Heart left ventricle (tissue), 16 donors: ENCODE measurements at regions of chr20 and their contacts with region 1.

Region 1: GRCh38 chr20:58870239-58871014 is 17.9 kb downstream of the GNAS start:
- DNase-seq: peak; percentile 64 to 80 (median 67)
- ATAC-seq: peak; percentile 59 to 90 (median 86)
- H3K4me3 ChIP-seq: no peak overlapping the region
- H3K27ac ChIP-seq: no peak overlapping the region
- H3K4me1 ChIP-seq: peaks cover 0 to 8% (median 0%) of the 10 kb centered on the region in 12 donors
- H3K27me3 ChIP-seq: no peaks in the 10 kb centered on the region
- CTCF ChIP-seq: peak; percentile 80 to 94 (median 91)
- POLR2A ChIP-seq: no peak

Region 2: DNA sequence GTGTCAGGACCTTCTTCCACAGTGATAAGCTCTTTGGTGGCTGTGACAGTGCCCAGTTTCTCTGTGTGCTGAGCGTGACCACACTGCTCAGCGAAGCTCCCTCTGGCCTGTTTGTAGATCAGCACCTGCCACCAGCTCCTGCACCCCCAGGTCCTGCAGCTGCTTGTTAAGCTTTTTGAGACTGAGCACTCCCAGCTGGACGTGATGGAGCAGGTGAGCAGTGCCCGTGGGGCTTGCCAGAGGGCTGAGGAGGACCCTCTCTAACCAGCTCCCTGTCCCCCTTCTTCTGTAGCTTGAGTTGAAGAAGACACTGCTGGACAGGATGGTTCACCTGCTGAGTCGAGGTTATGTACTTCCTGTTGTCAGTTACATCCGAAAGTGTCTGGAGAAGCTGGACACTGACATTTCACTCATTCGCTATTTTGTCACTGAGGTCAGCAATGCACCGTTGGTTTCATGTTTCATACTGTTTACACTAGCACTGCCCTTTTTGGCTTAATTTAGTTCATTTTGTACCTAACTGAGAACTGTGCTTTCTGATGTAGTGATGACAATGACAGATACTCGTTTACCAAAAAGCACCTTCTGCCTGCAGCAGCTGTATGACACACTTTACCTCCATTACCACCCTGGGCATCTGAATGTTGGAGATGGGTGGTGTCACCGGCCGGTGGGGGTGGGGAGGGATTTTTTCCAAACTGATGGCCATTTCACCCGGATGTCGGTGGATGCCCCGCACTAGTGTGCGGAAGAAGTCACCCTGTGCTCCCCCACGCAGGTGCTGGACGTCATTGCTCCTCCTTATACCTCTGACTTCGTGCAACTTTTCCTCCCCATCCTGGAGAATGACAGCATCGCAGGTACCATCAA is 123.1 kb after region 1 on chr20:
- intact Hi-C with region 1: no loop called
- DNase-seq: peak in 2 of 5 donors; percentile 13 to 17
- ATAC-seq: peak in 1 of 4 donors; percentile 7
- H3K4me3 ChIP-seq: no peak overlapping the region
- H3K27ac ChIP-seq: peak overlapping the region in 1 of 12 donors; percentile 37
- H3K4me1 ChIP-seq: peaks cover 0 to 14% (median 0%) of the 10 kb centered on the region in 12 donors
- H3K27me3 ChIP-seq: no peaks in the 10 kb centered on the region
- CTCF ChIP-seq: no peak
- POLR2A ChIP-seq: no peak

Region 3: GRCh38 chr20:59082077-59082740 is 211.8 kb after region 1 on chr20:
- intact Hi-C with region 1: loop called in 6 of 10 experiments (anchors 2 to 10 kb)
- DNase-seq: no peak
- ATAC-seq: no peak
- H3K4me3 ChIP-seq: no peak overlapping the region
- H3K27ac ChIP-seq: no peak overlapping the region
- H3K4me1 ChIP-seq: peaks cover 0 to 9% (median 2%) of the 10 kb centered on the region in 12 donors
- H3K27me3 ChIP-seq: peaks cover 0 to 21% (median 0%) of the 10 kb centered on the region in 9 donors
- CTCF ChIP-seq: peak; percentile 16 to 48 (median 27)
- POLR2A ChIP-seq: no peak

Region 4: GRCh38 chr20:59149651-59150504 is 279.5 kb after region 1 on chr20:
- intact Hi-C with region 1: no loop called
- DNase-seq: peak in 3 of 5 donors; percentile 35 to 56 (median 50)
- ATAC-seq: peak in 2 of 4 donors; percentile 14 to 73
- H3K4me3 ChIP-seq: peak overlapping the region in 1 of 12 donors; percentile 13
- H3K27ac ChIP-seq: peak overlapping the region in 9 of 12 donors; percentile 33 to 77 (median 66)
- H3K4me1 ChIP-seq: peaks cover 4 to 64% (median 38%) of the 10 kb centered on the region in 12 donors
- H3K27me3 ChIP-seq: no peaks in the 10 kb centered on the region
- CTCF ChIP-seq: no peak
- POLR2A ChIP-seq: no peak

Region 5: DNA sequence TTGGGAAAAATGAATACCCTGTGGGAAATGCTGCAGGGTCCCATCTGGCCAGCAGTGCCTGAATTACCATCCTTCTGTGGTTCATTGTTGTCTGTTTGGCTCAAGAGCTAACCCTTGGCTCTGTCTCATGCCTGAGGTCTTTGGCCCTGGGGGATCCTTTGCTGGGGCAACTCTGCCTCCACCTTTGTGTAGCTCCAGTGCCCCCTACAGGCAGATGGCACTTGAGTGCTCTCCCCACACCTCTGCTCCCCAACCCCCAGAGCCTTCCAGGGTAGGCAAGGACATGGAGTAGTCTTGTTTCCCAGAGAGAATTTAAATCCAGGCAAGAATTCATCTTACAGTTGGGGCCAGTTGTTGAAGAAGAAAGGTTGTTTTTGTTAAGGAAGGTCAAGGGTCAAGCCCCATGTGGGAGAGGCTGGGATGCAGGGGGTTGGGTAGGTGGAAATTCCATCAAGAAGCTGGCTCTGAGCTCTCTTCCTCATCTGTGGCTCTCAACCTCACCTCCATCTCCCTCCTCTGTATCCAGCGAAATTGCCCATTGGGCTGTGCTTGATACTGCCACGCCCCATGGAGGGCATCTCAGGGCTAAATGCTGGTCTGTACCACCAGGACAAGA is 337.4 kb after region 1 on chr20:
- intact Hi-C with region 1: loop called in 8 of 10 experiments (anchors 1 to 5 kb)
- DNase-seq: peak; percentile 46 to 75 (median 60)
- ATAC-seq: peak; percentile 55 to 85 (median 80)
- H3K4me3 ChIP-seq: no peak overlapping the region
- H3K27ac ChIP-seq: no peak overlapping the region
- H3K4me1 ChIP-seq: peaks cover 0 to 36% (median 6%) of the 10 kb centered on the region in 12 donors
- H3K27me3 ChIP-seq: peaks cover 0 to 26% (median 0%) of the 10 kb centered on the region in 9 donors
- CTCF ChIP-seq: peak; percentile 40 to 70 (median 58)
- POLR2A ChIP-seq: no peak

Region 6: GRCh38 chr20:59403261-59403961 is 533.0 kb after region 1 on chr20:
- intact Hi-C with region 1: loop called in 9 of 10 experiments (anchors 2 to 10 kb)
- DNase-seq: peak in 4 of 5 donors; percentile 29 to 75 (median 40)
- ATAC-seq: peak in 3 of 4 donors; percentile 33 to 70 (median 56)
- H3K4me3 ChIP-seq: peak overlapping the region in 4 of 12 donors; percentile 3 to 11 (median 4)
- H3K27ac ChIP-seq: no peak overlapping the region
- H3K4me1 ChIP-seq: peaks cover 0 to 18% (median 7%) of the 10 kb centered on the region in 12 donors
- H3K27me3 ChIP-seq: peaks cover 9 to 81% (median 47%) of the 10 kb centered on the region in 9 donors
- CTCF ChIP-seq: peak; percentile 88 to 98 (median 94)
- POLR2A ChIP-seq: no peak

Region 7: GRCh38 chr20:59495894-59496510 is 625.6 kb after region 1 on chr20:
- intact Hi-C with region 1: loop called in 8 of 10 experiments (anchors 5 to 10 kb)
- DNase-seq: peak; percentile 50 to 77 (median 62)
- ATAC-seq: peak in 3 of 4 donors; percentile 56 to 64 (median 60)
- H3K4me3 ChIP-seq: no peak overlapping the region
- H3K27ac ChIP-seq: no peak overlapping the region
- H3K4me1 ChIP-seq: peaks cover 0 to 5% (median 0%) of the 10 kb centered on the region in 12 donors
- H3K27me3 ChIP-seq: peaks cover 0 to 40% (median 8%) of the 10 kb centered on the region in 9 donors
- CTCF ChIP-seq: peak; percentile 74 to 90 (median 84)
- POLR2A ChIP-seq: no peak